GM18951 (cell line): ENCODE measurements at regions of chr10 and their contacts with region 1.

Region 1: GRCh38 chr10:88553116-88553752 is 29.9 kb downstream of the RNLS start:
- POLR2A ChIP-seq: no peak

Region 2: GRCh38 chr10:87850742-87851205 is 702.5 kb before region 1 on chr10:
- in situ Hi-C with region 1: loop called (anchors 10 kb)
- POLR2A ChIP-seq: no peak

Region 3: DNA sequence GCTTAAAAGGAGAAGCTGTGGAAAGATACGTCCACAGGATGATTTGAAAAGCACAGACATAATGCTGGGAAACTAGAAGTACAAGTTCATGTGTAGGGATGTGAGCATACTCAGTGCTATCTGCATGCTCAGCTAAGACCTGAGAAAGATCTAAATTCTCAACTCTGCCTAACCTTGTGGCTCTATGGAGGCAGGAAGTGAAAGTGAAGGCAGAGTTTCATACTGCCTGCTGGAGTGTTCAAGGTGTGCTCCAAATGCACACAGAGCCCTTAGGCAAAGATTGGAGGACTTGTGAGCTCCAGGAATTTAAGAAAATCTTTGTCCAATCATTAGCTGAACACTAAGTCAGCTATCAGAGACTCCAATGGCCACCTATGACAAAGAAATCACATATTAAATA is 161.0 kb before region 1 on chr10:
- in situ Hi-C with region 1: loop called (anchors 10 kb)
- POLR2A ChIP-seq: no peak